B cell (primary cell): ENCODE measurements at regions of chr10 and their contacts with region 1.

Region 1: GRCh38 chr10:22335173-22336123 is 9.8 kb upstream of the SPAG6 start:
- DNase-seq: peak; percentile 93
- ATAC-seq: peak; percentile 74
- H3K4me3 ChIP-seq: peak overlapping the region; percentile 41 to 69 (median 65)
- H3K4me3 Mint-ChIP-seq: peak overlapping the region; percentile 94
- H3K27ac ChIP-seq: peak overlapping the region in 1 of 2 donors; percentile 58
- H3K27ac Mint-ChIP-seq: peak overlapping the region; percentile 96
- H3K4me1 ChIP-seq: peaks cover 48 to 63% of the 10 kb centered on the region in 2 donors
- H3K4me1 Mint-ChIP-seq: peaks cover 39% of the 10 kb centered on the region
- H3K27me3 ChIP-seq: peaks cover 8 to 48% (median 41%) of the 10 kb centered on the region in 4 experiments
- H3K27me3 Mint-ChIP-seq: peaks cover 27% of the 10 kb centered on the region
- CTCF ChIP-seq: peak; percentile 30

Region 2: GRCh38 chr10:22228943-22229801 is 106.3 kb before region 1 on chr10:
- CTCF ChIA-PET with region 1: interaction called, 4 read pairs
- POLR2A ChIA-PET with region 1: interaction called, 6 read pairs
- intact Hi-C with region 1: loop called (anchors 1 kb)
- DNase-seq: peak; percentile 96
- ATAC-seq: peak; percentile 81
- H3K4me3 ChIP-seq: peak overlapping the region; percentile 68 to 83 (median 81)
- H3K4me3 Mint-ChIP-seq: peak overlapping the region; percentile 90
- H3K27ac ChIP-seq: peak overlapping the region; percentile 66 to 77
- H3K27ac Mint-ChIP-seq: peak overlapping the region; percentile 100
- H3K4me1 ChIP-seq: no peaks in the 10 kb centered on the region
- H3K4me1 Mint-ChIP-seq: peaks cover 14% of the 10 kb centered on the region
- H3K27me3 ChIP-seq: no peaks in the 10 kb centered on the region
- H3K27me3 Mint-ChIP-seq: peaks cover 7% of the 10 kb centered on the region
- CTCF ChIP-seq: no peak

Region 3: GRCh38 chr10:22365233-22365632 is 29.8 kb after region 1 on chr10:
- CTCF ChIA-PET with region 1: no interaction called
- POLR2A ChIA-PET with region 1: no interaction called
- intact Hi-C with region 1: no loop called
- DNase-seq: peak; percentile 41
- ATAC-seq: peak; percentile 89
- H3K4me3 ChIP-seq: no peak overlapping the region
- H3K4me3 Mint-ChIP-seq: no peak overlapping the region
- H3K27ac ChIP-seq: no peak overlapping the region
- H3K27ac Mint-ChIP-seq: no peak overlapping the region
- H3K4me1 ChIP-seq: peaks cover 6% of the 10 kb centered on the region in 2 donors
- H3K4me1 Mint-ChIP-seq: peaks cover 14% of the 10 kb centered on the region
- H3K27me3 ChIP-seq: no peaks in the 10 kb centered on the region
- H3K27me3 Mint-ChIP-seq: no peaks in the 10 kb centered on the region
- CTCF ChIP-seq: no peak

Region 4: DNA sequence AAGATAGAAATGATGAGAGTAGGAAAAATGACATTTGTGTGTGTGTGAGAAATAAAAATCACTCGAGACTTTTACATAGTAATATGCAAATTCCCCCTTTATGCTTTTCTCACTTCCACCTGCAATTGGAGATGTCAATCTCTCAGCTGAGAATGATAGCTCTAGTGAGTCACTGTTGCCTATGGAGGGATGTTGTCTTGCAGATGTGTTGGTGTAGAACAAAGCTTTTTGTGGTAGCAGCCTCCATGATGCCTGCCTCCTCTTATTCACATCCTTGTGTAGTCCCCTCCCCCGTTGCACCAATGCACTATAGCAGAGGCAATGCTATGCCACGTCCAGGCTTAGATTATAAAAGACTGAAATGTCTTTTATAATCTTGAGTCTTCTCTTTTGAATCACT is 43.6 kb after region 1 on chr10:
- CTCF ChIA-PET with region 1: no interaction called
- POLR2A ChIA-PET with region 1: no interaction called
- intact Hi-C with region 1: no loop called
- DNase-seq: no peak
- ATAC-seq: peak; percentile 36
- H3K4me3 ChIP-seq: no peak overlapping the region
- H3K4me3 Mint-ChIP-seq: no peak overlapping the region
- H3K27ac ChIP-seq: no peak overlapping the region
- H3K27ac Mint-ChIP-seq: no peak overlapping the region
- H3K4me1 ChIP-seq: peaks cover 0 to 12% of the 10 kb centered on the region in 2 donors
- H3K4me1 Mint-ChIP-seq: peaks cover 18% of the 10 kb centered on the region
- H3K27me3 ChIP-seq: no peaks in the 10 kb centered on the region
- H3K27me3 Mint-ChIP-seq: peaks cover 4% of the 10 kb centered on the region
- CTCF ChIP-seq: no peak